ENCODE measurements at regions of chr3 and their contacts with region 1.

Region 1: GRCh38 chr3:189270248-189270832 is 98.6 kb downstream of the TPRG1 start:
- DNase-seq: peak in 1 of 2 experiments; percentile 33
- H3K4me3 ChIP-seq: no peak overlapping the region
- H3K27ac ChIP-seq: no peak overlapping the region
- H3K4me1 ChIP-seq: no peaks in the 10 kb centered on the region
- H3K27me3 ChIP-seq: no peaks in the 10 kb centered on the region
- CTCF ChIP-seq: peak; percentile 62 to 77 (median 75)
- EP300 ChIP-seq: no peak
- POLR2A ChIP-seq: no peak
- RAD21 ChIP-seq: peak; percentile 82 to 88

Region 2: DNA sequence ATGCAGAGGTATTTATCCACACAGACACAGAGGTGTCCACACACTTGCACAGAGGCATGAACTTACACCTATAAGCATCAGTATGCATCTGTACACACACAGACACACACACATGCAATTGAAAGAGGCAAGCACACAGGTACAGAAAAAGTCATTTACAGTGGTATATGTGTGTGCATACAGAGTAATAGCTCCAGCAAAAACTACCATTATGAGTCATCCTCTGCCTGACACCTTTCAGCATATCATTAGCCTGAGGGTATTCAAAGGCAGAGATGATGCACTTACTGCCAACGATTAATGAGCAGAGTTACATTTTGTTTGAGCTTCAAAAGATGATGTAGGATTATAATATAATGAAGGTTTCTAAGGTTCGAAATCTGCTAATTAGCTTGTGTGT is 198.9 kb before region 1 on chr3:
- CTCF ChIA-PET with region 1: no interaction called
- POLR2A ChIA-PET with region 1: no interaction called
- DNase-seq: no peak
- H3K4me3 ChIP-seq: no peak overlapping the region
- H3K27ac ChIP-seq: no peak overlapping the region
- H3K4me1 ChIP-seq: no peaks in the 10 kb centered on the region
- H3K27me3 ChIP-seq: no peaks in the 10 kb centered on the region
- CTCF ChIP-seq: no peak
- EP300 ChIP-seq: no peak
- POLR2A ChIP-seq: no peak
- RAD21 ChIP-seq: no peak

Region 3: DNA sequence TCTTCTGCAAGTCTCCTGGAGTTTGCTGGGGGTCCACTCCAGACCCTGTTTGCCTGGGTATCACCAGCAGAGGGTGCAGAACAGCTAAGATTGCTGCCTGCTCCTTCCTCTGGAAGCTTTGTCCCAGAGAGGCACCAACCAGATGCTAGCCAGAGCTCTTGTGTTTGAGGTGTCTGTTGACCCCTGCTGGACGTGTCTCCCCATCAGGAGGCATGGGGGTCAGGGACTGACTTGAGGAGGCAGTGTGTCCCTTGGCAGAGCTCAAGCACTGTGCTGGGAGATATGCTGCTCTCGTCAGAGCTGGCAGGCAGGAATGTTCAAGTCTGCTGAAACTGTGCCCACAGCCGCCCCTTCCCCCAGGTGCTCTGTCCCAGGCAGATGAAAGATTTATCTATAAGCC is 12.1 kb before region 1 on chr3:
- CTCF ChIA-PET with region 1: interaction called, 13 read pairs
- POLR2A ChIA-PET with region 1: no interaction called
- DNase-seq: no peak
- H3K4me3 ChIP-seq: no peak overlapping the region
- H3K27ac ChIP-seq: no peak overlapping the region
- H3K4me1 ChIP-seq: peaks cover 0 to 3% (median 0%) of the 10 kb centered on the region in 4 experiments; a peak in 1 of 7 replicates
- H3K27me3 ChIP-seq: no peaks in the 10 kb centered on the region
- CTCF ChIP-seq: peak in 1 of 3 experiments; percentile 30; a peak in 1 of 4 replicates
- EP300 ChIP-seq: no peak
- POLR2A ChIP-seq: no peak
- RAD21 ChIP-seq: peak; percentile 15 to 45; a peak in 3 of 4 replicates

Region 4: DNA sequence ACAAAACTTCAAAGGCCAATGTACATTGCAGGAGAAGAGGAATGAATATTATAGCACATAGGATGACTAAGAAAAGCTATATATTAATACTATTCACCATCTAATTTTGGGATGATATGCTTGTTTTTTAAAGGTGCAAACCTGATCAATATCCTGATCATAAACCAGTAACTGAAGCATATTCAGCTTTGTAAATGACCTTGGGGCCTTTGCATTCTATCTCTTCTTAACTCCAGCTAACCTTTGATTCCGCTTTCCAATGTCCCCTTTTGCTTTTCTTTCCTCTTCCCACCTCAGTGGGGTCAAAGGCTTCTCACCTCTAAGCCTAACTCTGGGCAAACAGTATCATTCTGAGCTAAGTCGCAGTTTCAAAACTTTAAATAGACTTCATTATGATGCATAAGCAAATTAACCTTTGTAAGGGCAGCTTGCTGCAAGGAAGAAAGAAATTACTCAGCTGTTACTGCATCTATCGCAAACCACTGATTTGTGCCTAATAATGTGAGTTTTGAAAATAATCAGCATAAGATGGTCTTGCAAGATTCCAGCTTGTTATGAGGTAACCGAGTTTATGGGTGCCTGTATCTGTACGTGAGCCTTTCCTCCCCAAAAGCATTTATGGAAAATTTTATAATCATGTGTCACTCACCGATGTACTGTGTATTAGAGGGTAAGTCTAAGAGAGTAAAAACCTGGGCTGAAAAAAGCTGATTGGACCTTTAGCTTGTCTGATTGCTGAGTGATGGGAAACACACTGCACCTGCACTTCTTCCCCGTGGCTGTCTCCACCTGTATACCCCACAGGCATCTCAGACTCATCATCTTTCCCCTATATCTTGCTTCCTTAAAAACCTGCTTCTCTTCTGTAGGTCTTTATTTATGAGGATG is 18.3 kb after region 1 on chr3:
- CTCF ChIA-PET with region 1: interaction called, 11 read pairs
- POLR2A ChIA-PET with region 1: no interaction called
- DNase-seq: no peak
- H3K4me3 ChIP-seq: no peak overlapping the region
- H3K27ac ChIP-seq: no peak overlapping the region
- H3K4me1 ChIP-seq: peaks cover 0 to 2% (median 0%) of the 10 kb centered on the region in 4 experiments; a peak in 1 of 7 replicates
- H3K27me3 ChIP-seq: no peaks in the 10 kb centered on the region
- CTCF ChIP-seq: no peak
- EP300 ChIP-seq: no peak
- POLR2A ChIP-seq: no peak
- RAD21 ChIP-seq: no peak

Region 5: GRCh38 chr3:189652042-189652441 is 381.7 kb after region 1 on chr3:
- CTCF ChIA-PET with region 1: interaction called, 24 read pairs
- POLR2A ChIA-PET with region 1: no interaction called
- DNase-seq: peak in 1 of 2 experiments; percentile 86
- H3K4me3 ChIP-seq: no peak overlapping the region
- H3K27ac ChIP-seq: no peak overlapping the region
- H3K4me1 ChIP-seq: no peaks in the 10 kb centered on the region
- H3K27me3 ChIP-seq: no peaks in the 10 kb centered on the region
- CTCF ChIP-seq: peak; percentile 72 to 88 (median 85)
- EP300 ChIP-seq: no peak
- POLR2A ChIP-seq: no peak
- RAD21 ChIP-seq: peak; percentile 72 to 77

Region 6: GRCh38 chr3:189685854-189686253 is 415.5 kb after region 1 on chr3:
- CTCF ChIA-PET with region 1: interaction called, 16 read pairs
- POLR2A ChIA-PET with region 1: no interaction called
- DNase-seq: no peak
- H3K4me3 ChIP-seq: no peak overlapping the region
- H3K27ac ChIP-seq: no peak overlapping the region
- H3K4me1 ChIP-seq: no peaks in the 10 kb centered on the region
- H3K27me3 ChIP-seq: no peaks in the 10 kb centered on the region
- CTCF ChIP-seq: no peak
- EP300 ChIP-seq: no peak
- POLR2A ChIP-seq: no peak
- RAD21 ChIP-seq: no peak

Region 7: GRCh38 chr3:189947948-189948723 is 677.8 kb after region 1 on chr3:
- CTCF ChIA-PET with region 1: interaction called, 25 read pairs
- POLR2A ChIA-PET with region 1: no interaction called
- DNase-seq: no peak
- H3K4me3 ChIP-seq: no peak overlapping the region
- H3K27ac ChIP-seq: no peak overlapping the region
- H3K4me1 ChIP-seq: no peaks in the 10 kb centered on the region
- H3K27me3 ChIP-seq: no peaks in the 10 kb centered on the region
- CTCF ChIP-seq: peak in 2 of 3 experiments; percentile 55 to 56; a peak in 2 of 4 replicates
- EP300 ChIP-seq: no peak
- POLR2A ChIP-seq: no peak
- RAD21 ChIP-seq: peak; percentile 90

Measured in H1 (cell line).